OCI-LY7 (cell line): ENCODE measurements at regions of chr12 and their contacts with region 1.

Region 1: GRCh38 chr12:64431791-64432190 is 20.1 kb upstream of the TBK1 start:
- DNase-seq: no peak
- H3K4me3 ChIP-seq: no peak overlapping the region
- H3K27ac ChIP-seq: no peak overlapping the region
- H3K4me1 ChIP-seq: no peaks in the 10 kb centered on the region
- CTCF ChIP-seq: no peak

Region 2: DNA sequence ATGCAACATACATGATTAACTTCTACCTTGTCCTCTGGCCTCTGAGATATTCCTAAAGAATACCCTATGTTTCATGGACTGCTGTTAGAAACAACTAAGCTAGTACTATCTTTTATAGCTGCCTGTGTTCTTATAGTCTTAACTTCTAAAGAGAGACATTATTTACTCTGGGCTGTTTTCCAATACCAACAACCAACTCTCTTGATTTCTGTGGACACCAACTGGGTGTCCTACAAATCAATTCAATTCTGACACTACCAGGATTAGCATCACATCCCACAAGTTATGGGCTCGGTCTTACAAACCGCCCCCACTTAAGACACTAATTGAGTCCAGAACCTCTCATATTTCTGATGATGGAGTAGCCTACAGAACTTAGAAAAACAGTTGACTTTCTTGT is 19.3 kb before region 1 on chr12:
- CTCF ChIA-PET with region 1: no interaction called
- POLR2A ChIA-PET with region 1: interaction called, 9 read pairs
- intact Hi-C with region 1: loop called (anchors 2 kb)
- DNase-seq: no peak
- H3K4me3 ChIP-seq: no peak overlapping the region
- H3K27ac ChIP-seq: no peak overlapping the region
- H3K4me1 ChIP-seq: peaks cover 3% of the 10 kb centered on the region
- CTCF ChIP-seq: no peak

Region 3: GRCh38 chr12:64494998-64495729 is 63.4 kb after region 1 on chr12:
- CTCF ChIA-PET with region 1: no interaction called
- POLR2A ChIA-PET with region 1: no interaction called
- intact Hi-C with region 1: loop called (anchors 5 kb)
- DNase-seq: no peak
- H3K4me3 ChIP-seq: no peak overlapping the region
- H3K27ac ChIP-seq: no peak overlapping the region
- H3K4me1 ChIP-seq: no peaks in the 10 kb centered on the region
- CTCF ChIP-seq: no peak